ENCODE measurements at regions of chr1 and their contacts with region 1.

Region 1: GRCh38 chr1:225777583-225778336 is at the start of gene SRP9:
- DNase-seq: peak; percentile 99
- ATAC-seq: peak; percentile 97
- H3K4me3 Mint-ChIP-seq: no peak within 1 kb of the TSS
- H3K27ac Mint-ChIP-seq: no peak within 1 kb of the TSS
- H3K4me1 Mint-ChIP-seq: peaks cover 31% of the 10 kb centered on the region
- H3K27me3 Mint-ChIP-seq: no peaks in the 10 kb centered on the region
- total RNA-seq, gene SRP9: 263 to 308 TPM

Region 2: DNA sequence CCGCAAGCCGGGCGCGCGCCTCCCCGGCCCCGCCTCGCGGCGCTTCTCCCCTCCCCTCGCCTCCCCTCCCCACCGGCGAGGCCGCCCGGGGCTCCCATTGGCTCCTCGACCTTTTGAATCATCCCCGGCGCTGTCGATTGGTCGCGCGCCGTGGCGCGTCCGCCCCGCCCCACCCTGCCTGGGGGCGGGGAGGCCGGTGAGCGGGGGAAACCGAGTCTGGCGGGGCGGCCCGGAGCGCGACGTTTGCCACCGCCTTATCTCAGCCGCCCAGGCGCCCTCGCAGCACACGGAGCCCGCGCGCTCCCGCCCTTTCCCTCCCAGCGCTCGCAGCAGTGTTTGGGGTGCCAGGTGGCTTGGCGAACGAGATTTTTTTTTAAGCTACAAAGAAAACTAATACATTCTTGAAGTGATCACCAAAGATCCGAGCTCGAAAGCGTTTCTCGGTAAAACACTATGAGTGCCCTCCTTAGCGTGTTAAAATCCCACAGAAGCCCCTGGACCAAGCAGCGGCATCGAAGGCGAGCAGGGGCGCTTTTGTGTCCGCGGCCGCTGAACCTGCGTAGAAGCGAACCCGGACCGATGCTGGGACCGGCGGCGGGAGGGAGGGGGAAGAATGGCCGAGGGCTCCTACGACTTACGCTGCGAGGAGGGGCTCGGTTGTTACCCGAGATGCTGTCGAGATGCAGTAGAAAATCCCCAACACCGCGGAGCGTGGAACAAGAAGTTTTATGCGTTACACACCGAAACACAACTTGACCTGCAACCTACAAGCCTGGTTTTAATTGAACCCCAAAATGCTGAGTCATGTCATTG is 349.5 kb before region 1 on chr1:
- CTCF ChIA-PET with region 1: no interaction called
- POLR2A ChIA-PET with region 1: no interaction called
- intact Hi-C with region 1: loop called in 1 of 2 experiments (anchors 1 kb)
- DNase-seq: peak; percentile 95
- ATAC-seq: peak; percentile 92
- H3K4me3 Mint-ChIP-seq: peak overlapping the region; percentile 86
- H3K27ac Mint-ChIP-seq: peak overlapping the region; percentile 96
- H3K4me1 Mint-ChIP-seq: peaks cover 45% of the 10 kb centered on the region
- H3K27me3 Mint-ChIP-seq: no peaks in the 10 kb centered on the region

Region 3: DNA sequence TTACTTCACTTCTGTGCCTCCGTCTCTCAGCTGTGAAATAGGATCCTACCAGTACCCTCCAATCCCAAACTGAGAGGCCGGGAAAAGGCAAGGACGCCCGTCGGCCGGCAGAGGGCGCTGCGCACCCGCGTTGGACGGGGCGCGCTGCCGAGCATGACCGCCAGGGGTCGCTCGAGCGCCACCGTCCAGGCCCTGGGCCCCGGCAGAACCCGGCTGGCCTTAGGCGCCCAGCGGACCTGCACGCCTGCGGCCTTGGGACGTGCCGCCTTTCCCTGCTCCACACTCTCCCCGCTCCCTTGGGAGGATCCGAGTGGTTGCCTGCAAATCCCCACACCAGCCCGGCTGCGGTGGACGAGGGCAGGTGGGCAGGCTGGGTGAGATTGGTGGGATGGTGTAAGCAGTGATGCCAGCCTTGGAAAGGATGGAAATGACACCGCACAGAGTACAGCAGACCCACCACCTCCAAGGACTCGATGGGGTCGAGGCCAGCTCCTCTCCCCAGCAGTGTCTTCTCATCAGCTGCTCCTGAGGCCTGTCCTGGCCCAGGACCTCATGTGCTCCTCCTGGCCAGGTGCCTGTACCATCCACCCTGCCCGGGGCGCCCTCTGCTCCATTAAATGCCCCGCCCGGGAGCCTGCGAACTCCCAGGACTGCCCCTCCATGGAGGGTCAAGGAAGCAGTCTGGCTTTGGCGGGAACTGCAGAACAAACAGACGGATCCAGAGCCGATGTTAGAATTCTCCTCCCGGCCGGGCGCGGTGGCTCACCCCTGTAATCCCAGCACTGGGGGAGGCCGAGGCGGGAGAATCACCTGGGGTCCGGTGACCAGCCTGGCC is 302.6 kb before region 1 on chr1:
- CTCF ChIA-PET with region 1: interaction called, 15 read pairs
- POLR2A ChIA-PET with region 1: no interaction called
- intact Hi-C with region 1: loop called (anchors 1 to 2 kb)
- DNase-seq: peak; percentile 80
- ATAC-seq: peak; percentile 70
- H3K4me3 Mint-ChIP-seq: no peak overlapping the region
- H3K27ac Mint-ChIP-seq: no peak overlapping the region
- H3K4me1 Mint-ChIP-seq: peaks cover 41% of the 10 kb centered on the region
- H3K27me3 Mint-ChIP-seq: no peaks in the 10 kb centered on the region

Region 4: DNA sequence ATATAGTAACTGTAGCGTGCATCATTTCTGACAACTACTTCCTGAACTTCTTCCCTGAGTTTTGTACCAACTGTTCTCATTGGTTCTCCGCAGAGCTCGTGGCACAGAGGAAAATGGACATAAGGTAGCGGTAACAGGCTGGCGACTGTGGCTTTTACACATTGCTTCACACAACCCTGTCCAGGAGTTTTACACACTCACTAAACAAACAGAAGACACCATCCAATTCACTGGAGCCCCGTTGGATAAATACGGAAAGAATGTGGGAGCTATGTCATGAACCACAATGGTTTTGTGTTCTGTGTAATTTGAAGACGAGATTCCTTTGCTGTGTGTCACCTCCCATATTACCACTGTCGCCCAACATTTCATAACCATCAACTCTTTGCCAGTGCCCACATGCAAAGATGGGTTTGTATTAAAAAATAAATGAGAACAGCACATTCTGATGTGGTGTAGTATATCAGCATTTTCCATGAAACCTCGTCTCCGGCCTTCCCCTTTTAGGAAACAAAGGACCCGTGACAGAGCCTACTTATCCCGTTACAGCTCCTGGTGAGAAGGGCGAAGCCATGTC is 77.5 kb before region 1 on chr1:
- CTCF ChIA-PET with region 1: no interaction called
- POLR2A ChIA-PET with region 1: no interaction called
- intact Hi-C with region 1: no loop called
- DNase-seq: no peak
- ATAC-seq: no peak
- H3K4me3 Mint-ChIP-seq: no peak overlapping the region
- H3K27ac Mint-ChIP-seq: no peak overlapping the region
- H3K4me1 Mint-ChIP-seq: no peaks in the 10 kb centered on the region
- H3K27me3 Mint-ChIP-seq: no peaks in the 10 kb centered on the region

Region 5: DNA sequence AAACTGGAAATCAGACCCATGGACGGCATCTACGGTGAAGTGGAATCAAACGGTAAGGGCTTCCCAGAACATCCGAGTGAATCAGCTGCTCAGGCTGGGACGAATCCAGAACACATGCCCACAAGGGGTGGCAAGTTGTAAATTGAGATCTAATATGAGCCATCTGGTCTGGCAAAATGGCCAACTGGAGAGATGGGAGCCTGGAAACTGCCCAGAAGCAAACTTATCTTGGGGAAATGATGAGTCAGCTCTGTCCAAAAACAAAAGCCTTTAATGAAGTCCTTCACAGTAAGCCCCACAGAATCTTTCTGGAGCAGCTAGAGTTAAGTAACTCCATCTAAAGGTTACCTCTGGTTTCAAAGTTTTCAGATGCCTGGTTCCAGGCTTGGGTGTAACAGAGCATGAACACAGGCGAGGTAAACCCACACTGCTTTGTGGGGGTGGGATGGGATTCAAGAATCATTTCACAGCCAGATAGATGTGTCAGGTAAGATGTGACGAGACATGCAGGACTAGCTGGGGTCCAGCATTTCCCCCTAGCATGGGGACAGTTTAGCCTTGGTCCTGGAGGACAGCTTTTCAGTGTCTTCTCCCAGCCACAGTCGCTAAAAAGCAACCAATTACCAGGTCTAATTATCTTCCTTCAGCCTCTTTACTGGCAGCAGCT is 10.7 kb before region 1 on chr1:
- CTCF ChIA-PET with region 1: interaction called, 11 read pairs
- POLR2A ChIA-PET with region 1: interaction called, 6 read pairs
- intact Hi-C with region 1: no loop called
- DNase-seq: no peak
- ATAC-seq: no peak
- H3K4me3 Mint-ChIP-seq: no peak overlapping the region
- H3K27ac Mint-ChIP-seq: no peak overlapping the region
- H3K4me1 Mint-ChIP-seq: no peaks in the 10 kb centered on the region
- H3K27me3 Mint-ChIP-seq: no peaks in the 10 kb centered on the region

Region 6: GRCh38 chr1:225809842-225810578 is 32.2 kb after region 1 on chr1 and contains the start of gene EPHX1:
- CTCF ChIA-PET with region 1: interaction called, 3 read pairs
- POLR2A ChIA-PET with region 1: interaction called, 3 read pairs
- intact Hi-C with region 1: loop called in 1 of 2 experiments (anchors 1 kb)
- DNase-seq: peak; percentile 84
- ATAC-seq: peak; percentile 98
- H3K4me3 Mint-ChIP-seq: peak within 1 kb of the TSS; percentile 75
- H3K27ac Mint-ChIP-seq: no peak within 1 kb of the TSS
- H3K4me1 Mint-ChIP-seq: peaks cover 8% of the 10 kb centered on the region
- H3K27me3 Mint-ChIP-seq: peaks cover 4% of the 10 kb centered on the region
- total RNA-seq, gene EPHX1: 2.5 to 2.6 TPM

Region 7: GRCh38 chr1:225896937-225897549 is 119.3 kb after region 1 on chr1:
- CTCF ChIA-PET with region 1: interaction called, 4 read pairs
- POLR2A ChIA-PET with region 1: interaction called, 3 read pairs
- intact Hi-C with region 1: loop called in 1 of 2 experiments (anchors 1 kb)
- DNase-seq: peak; percentile 80
- ATAC-seq: peak; percentile 98
- H3K4me3 Mint-ChIP-seq: peak overlapping the region; percentile 59
- H3K27ac Mint-ChIP-seq: peak overlapping the region; percentile 95
- H3K4me1 Mint-ChIP-seq: peaks cover 42% of the 10 kb centered on the region
- H3K27me3 Mint-ChIP-seq: no peaks in the 10 kb centered on the region

Region 8: GRCh38 chr1:225923692-225924555 is 146.2 kb after region 1 on chr1 and contains the start of gene PYCR2:
- CTCF ChIA-PET with region 1: interaction called, 18 read pairs
- POLR2A ChIA-PET with region 1: interaction called, 15 read pairs
- intact Hi-C with region 1: loop called in 1 of 2 experiments (anchors 1 kb)
- DNase-seq: peak; percentile 97
- ATAC-seq: peak; percentile 97
- H3K4me3 Mint-ChIP-seq: peak within 1 kb of the TSS; percentile 93
- H3K27ac Mint-ChIP-seq: peak within 1 kb of the TSS; percentile 96
- H3K4me1 Mint-ChIP-seq: peaks cover 54% of the 10 kb centered on the region
- H3K27me3 Mint-ChIP-seq: no peaks in the 10 kb centered on the region
- total RNA-seq, gene PYCR2: 106 to 126 TPM

Region 9: DNA sequence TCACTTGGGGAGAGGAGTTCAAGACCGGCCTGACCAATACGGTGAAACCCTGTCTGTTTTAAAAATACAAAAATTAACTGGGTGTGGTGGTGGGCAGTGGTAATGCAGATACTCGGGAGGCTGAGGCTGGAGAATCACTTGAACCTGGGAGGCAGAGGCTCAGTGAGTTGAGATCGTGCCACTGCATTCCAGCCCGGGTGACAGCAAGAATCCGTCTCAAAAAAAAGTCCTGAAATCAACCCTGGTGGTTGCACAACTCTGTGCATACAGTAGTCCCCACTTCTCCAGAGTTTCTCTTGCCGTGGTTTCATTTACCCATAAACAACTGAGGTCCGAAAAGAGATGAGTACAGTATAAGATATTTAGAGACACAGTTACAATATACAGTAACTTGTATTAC is 543.9 kb after region 1 on chr1:
- CTCF ChIA-PET with region 1: no interaction called
- POLR2A ChIA-PET with region 1: no interaction called
- intact Hi-C with region 1: no loop called
- DNase-seq: no peak
- ATAC-seq: no peak
- H3K4me3 Mint-ChIP-seq: no peak overlapping the region
- H3K27ac Mint-ChIP-seq: no peak overlapping the region
- H3K4me1 Mint-ChIP-seq: no peaks in the 10 kb centered on the region
- H3K27me3 Mint-ChIP-seq: peaks cover 6% of the 10 kb centered on the region

Region 10: GRCh38 chr1:227049253-227049652 is 1271.5 kb after region 1 on chr1:
- CTCF ChIA-PET with region 1: no interaction called
- POLR2A ChIA-PET with region 1: no interaction called
- intact Hi-C with region 1: no loop called
- DNase-seq: no peak
- ATAC-seq: no peak
- H3K4me3 Mint-ChIP-seq: no peak overlapping the region
- H3K27ac Mint-ChIP-seq: no peak overlapping the region
- H3K4me1 Mint-ChIP-seq: no peaks in the 10 kb centered on the region
- H3K27me3 Mint-ChIP-seq: peaks cover 9% of the 10 kb centered on the region

Measured in activated CD4-positive, alpha-beta T cell treated with anti-CD3 and anti-CD28 coated beads for 36 hours (primary cell).